Activated CD4-positive, alpha-beta memory T cell treated with anti-CD3 and anti-CD28 coated beads, Interleukin-2, amount 10 ng/mL, durations not matched to agents 7 days and 5 days (primary cell): ENCODE measurements at regions of chr1 and their contacts with region 1.

Region 1: DNA sequence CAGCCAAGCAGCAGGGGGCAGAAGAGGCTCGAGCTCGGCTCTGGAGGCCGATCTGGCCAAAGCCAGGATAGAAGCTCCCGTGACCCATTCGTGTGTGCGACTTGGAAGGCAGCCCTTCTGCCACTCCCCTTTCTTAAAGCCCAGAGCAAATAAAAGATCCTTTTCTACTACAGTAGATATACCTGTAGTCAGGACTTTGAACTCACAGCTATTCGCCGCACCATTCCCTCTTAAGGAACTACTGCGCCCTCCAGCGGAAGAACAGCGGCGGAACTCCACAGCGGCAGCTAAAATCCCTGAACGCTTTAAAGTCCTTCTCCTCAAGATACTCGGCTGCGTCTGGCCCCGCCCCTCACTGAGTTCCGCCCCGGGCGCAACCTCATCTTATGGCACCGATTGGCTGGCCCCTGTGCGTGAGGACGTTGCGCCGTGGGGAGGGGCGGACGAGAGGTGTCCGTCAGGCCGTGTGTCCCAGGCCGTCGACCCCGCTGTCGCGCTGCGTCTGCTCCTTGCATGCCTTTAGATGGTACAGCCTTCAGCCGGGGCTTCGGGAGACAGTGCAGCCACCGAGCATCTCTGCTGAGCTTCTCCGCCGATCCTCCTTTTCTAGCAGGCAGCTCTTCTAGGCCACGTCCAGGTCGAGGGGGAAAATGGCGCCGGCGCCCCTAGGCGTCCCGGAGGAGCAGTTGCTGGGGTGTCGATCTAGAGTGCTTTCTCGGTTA is at the start of gene LRIG2:
- DNase-seq: peak; percentile 98
- H3K4me3 Mint-ChIP-seq: peak within 1 kb of the TSS; percentile 96
- H3K27ac Mint-ChIP-seq: peak within 1 kb of the TSS; percentile 85
- H3K4me1 Mint-ChIP-seq: peaks cover 30% of the 10 kb centered on the region
- H3K27me3 Mint-ChIP-seq: no peaks in the 10 kb centered on the region
- total RNA-seq, gene LRIG2: 9.6 to 10.8 TPM

Region 2: DNA sequence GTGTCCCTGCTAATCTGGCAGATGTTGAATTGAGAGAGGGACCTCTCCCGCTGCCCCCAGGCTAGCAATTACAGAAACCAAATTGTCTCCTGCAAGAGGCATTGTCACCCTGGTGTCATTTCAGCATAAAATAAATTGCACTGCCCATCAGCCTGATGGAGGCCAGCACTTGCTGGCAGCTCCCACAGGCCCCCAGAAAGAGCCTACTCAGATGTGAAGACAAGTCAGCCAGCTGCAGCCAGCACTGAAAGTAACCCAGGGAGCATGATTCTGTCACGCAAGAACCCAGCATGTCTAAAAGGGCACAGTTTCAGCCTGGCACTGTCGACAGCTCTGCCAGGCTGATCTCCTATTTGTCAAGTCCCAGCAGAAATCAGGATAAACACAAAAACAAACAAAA is 787.2 kb before region 1 on chr1:
- CTCF ChIA-PET with region 1: no interaction called
- POLR2A ChIA-PET with region 1: no interaction called
- DNase-seq: no peak
- H3K4me3 Mint-ChIP-seq: no peak overlapping the region
- H3K27ac Mint-ChIP-seq: no peak overlapping the region
- H3K4me1 Mint-ChIP-seq: no peaks in the 10 kb centered on the region
- H3K27me3 Mint-ChIP-seq: peaks cover 16% of the 10 kb centered on the region

Region 3: GRCh38 chr1:112803906-112804762 is 268.8 kb before region 1 on chr1:
- CTCF ChIA-PET with region 1: interaction called, 12 read pairs
- POLR2A ChIA-PET with region 1: no interaction called
- DNase-seq: peak; percentile 68
- H3K4me3 Mint-ChIP-seq: no peak overlapping the region
- H3K27ac Mint-ChIP-seq: no peak overlapping the region
- H3K4me1 Mint-ChIP-seq: no peaks in the 10 kb centered on the region
- H3K27me3 Mint-ChIP-seq: peaks cover 6% of the 10 kb centered on the region

Region 4: DNA sequence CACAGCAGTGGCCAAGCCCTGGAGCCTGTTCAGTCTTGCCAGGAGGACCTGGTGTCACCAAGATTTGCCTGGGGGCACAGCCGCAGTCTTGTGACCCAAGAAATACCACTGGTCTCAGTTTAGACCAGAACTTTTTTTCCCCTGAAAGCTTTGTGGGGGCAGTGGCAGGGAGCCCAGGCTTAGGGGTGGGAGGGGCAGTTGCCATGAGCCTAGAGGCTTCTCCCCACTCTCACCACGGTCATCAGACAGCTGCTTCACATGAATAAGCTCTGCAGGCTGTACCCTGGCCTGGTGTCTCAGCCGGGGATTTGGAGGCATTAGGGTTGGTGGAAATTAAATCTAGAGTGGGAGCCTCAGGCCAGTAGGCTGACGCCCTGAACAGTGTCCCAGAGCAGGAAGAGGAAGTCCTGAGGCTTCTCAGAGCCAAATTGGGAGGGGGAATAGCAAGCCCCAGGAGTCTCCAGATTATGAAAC is 190.6 kb before region 1 on chr1:
- CTCF ChIA-PET with region 1: interaction called, 45 read pairs
- POLR2A ChIA-PET with region 1: no interaction called
- DNase-seq: no peak
- H3K4me3 Mint-ChIP-seq: no peak overlapping the region
- H3K27ac Mint-ChIP-seq: no peak overlapping the region
- H3K4me1 Mint-ChIP-seq: peaks cover 3% of the 10 kb centered on the region
- H3K27me3 Mint-ChIP-seq: peaks cover 16% of the 10 kb centered on the region

Region 5: GRCh38 chr1:112955781-112956543 is 117.0 kb before region 1 on chr1 and contains the start of gene SLC16A1:
- CTCF ChIA-PET with region 1: interaction called, 36 read pairs
- POLR2A ChIA-PET with region 1: interaction called, 36 read pairs
- DNase-seq: peak; percentile 90
- H3K4me3 Mint-ChIP-seq: peak within 1 kb of the TSS; percentile 81
- H3K27ac Mint-ChIP-seq: peak within 1 kb of the TSS; percentile 99
- H3K4me1 Mint-ChIP-seq: peaks cover 56% of the 10 kb centered on the region
- H3K27me3 Mint-ChIP-seq: no peaks in the 10 kb centered on the region
- total RNA-seq, gene SLC16A1: 59.0 to 61.4 TPM

Region 6: DNA sequence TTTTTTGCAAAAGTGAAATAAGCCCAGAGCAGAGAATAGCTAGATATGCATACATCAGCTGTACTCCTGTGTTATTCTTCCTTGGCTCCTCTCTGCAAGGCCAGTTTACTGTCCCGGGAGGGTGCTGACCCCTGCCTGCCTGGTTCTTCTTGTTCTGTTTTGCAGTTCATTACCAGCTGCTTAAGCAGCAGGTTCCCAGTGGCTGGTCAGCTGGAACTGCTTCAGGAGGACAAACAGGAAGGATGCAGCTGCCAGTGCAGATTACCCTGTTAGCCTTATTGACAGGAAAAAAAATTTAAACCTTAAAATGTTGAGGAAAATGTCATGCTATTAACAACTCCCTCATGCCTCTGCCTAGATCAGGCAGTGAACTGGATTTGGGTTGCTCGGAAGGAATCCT is 15.9 kb before region 1 on chr1:
- CTCF ChIA-PET with region 1: interaction called, 63 read pairs
- POLR2A ChIA-PET with region 1: interaction called, 11 read pairs
- DNase-seq: no peak
- H3K4me3 Mint-ChIP-seq: no peak overlapping the region
- H3K27ac Mint-ChIP-seq: no peak overlapping the region
- H3K4me1 Mint-ChIP-seq: peaks cover 18% of the 10 kb centered on the region
- H3K27me3 Mint-ChIP-seq: no peaks in the 10 kb centered on the region